CD4-positive, alpha-beta T cell (primary cell): ENCODE measurements at regions of chr10 and their contacts with region 1.

Region 1: DNA sequence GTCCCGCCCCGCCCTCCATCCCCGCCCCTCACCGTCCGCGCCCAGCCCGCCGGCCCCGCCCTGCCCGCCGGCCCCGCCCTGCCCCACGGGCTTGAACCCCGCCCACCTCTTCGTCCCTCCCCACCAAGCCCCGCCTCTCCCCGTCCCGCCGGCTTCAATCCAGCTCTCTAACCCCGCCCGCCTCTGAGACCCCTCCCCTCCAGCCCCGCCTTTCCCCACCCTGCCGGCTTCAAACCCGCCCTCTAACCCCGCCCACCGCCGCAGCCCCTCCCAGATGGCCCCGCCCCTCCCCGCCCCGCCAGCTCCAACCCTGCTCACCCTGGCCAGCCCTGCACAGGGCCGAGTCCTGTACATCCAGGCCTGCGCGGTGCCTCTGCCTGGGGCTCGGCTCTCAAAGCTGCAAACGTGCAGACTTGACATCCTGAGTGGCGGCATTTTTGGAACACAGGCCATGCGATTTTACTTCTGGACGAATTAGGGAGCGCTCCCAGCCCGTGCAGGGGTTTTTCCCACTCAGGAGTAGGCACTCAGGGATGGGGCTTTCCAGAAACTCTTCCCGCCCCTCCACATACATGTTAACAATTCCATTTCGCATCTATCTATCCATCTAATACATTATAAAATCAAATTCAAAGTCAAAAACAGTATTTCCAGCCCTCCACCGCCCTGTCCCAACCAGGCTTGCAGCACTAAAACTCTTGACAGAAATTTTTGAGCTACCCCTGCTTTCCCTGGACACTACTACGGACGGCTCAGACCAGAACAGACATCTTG is 475 bp upstream of the NMT2 start:
- DNase-seq: peak; percentile 92 to 99 (median 97)
- ATAC-seq: peak; percentile 82
- H3K4me3 ChIP-seq: peak overlapping the region; percentile 56
- H3K4me3 Mint-ChIP-seq: peak overlapping the region; percentile 91
- H3K27ac ChIP-seq: peak overlapping the region; percentile 48 to 50
- H3K27ac Mint-ChIP-seq: peak overlapping the region; percentile 94
- H3K4me1 ChIP-seq: peaks cover 51% of the 10 kb centered on the region
- H3K4me1 Mint-ChIP-seq: peaks cover 72% of the 10 kb centered on the region
- H3K27me3 ChIP-seq: no peaks in the 10 kb centered on the region
- H3K27me3 Mint-ChIP-seq: no peaks in the 10 kb centered on the region
- CTCF ChIP-seq: no peak

Region 2: GRCh38 chr10:13348216-13349017 is 1820.6 kb before region 1 on chr10 and contains the start of gene SEPHS1:
- CTCF ChIA-PET with region 1: no interaction called
- POLR2A ChIA-PET with region 1: no interaction called
- intact Hi-C with region 1: loop called in 1 of 2 experiments (anchors 10 kb)
- DNase-seq: peak; percentile 67 to 91 (median 81)
- ATAC-seq: peak; percentile 69
- H3K4me3 ChIP-seq: peak within 1 kb of the TSS; percentile 91
- H3K4me3 Mint-ChIP-seq: peak within 1 kb of the TSS; percentile 98
- H3K27ac ChIP-seq: peak within 1 kb of the TSS; percentile 63 to 83
- H3K27ac Mint-ChIP-seq: peak within 1 kb of the TSS; percentile 93
- H3K4me1 ChIP-seq: peaks cover 50% of the 10 kb centered on the region
- H3K4me1 Mint-ChIP-seq: peaks cover 69% of the 10 kb centered on the region
- H3K27me3 ChIP-seq: no peaks in the 10 kb centered on the region
- H3K27me3 Mint-ChIP-seq: no peaks in the 10 kb centered on the region
- CTCF ChIP-seq: no peak
- total RNA-seq, gene SEPHS1: 13.1 to 17.9 TPM

Region 3: DNA sequence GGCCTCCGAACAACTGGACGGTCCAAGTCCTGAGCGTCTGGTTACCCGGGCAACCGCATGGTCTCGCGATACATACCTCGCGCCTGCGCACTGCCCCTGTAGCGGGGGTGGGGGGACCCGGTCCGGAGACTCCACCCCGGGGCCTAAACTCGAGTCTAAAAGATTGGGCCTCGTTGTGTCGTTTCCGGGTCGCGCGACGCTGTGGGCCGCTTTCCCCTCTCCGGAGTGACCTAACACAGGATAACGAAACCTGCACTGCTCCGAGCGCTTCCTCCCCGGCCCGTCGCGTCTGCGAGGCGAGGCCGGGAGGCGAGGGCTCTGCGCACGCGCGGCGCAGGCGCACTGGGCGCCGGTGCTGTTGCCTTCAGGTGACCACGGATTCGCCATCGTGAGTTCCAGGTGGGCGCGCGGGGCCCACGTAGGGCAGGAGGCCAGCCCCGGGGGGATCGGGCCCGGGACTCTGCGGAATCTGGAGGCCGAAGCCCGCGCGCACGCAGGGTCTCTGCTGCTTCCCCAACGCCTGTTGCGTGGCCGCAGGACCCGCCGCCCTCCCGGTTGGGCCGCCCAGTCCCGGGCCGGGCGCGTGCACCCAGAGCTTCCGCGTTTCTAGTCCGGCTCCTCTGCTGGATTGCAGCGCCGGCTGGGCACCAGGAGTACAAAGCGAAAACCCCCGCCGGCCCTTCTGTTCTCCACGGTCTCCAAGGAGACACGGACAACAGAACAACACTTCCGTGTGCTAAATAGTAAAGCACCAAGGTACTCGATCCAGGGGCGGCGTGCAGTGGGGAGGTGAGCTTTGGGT is 71.8 kb before region 1 on chr10 and contains the start of gene RPP38:
- CTCF ChIA-PET with region 1: interaction called, 4 read pairs
- POLR2A ChIA-PET with region 1: interaction called, 4 read pairs
- intact Hi-C with region 1: loop called in 1 of 2 experiments (anchors 5 kb)
- DNase-seq: peak; percentile 89 to 97 (median 92)
- ATAC-seq: peak; percentile 80
- H3K4me3 ChIP-seq: peak within 1 kb of the TSS; percentile 80
- H3K4me3 Mint-ChIP-seq: peak within 1 kb of the TSS; percentile 95
- H3K27ac ChIP-seq: peak within 1 kb of the TSS; percentile 89 to 95
- H3K27ac Mint-ChIP-seq: peak within 1 kb of the TSS; percentile 97
- H3K4me1 ChIP-seq: peaks cover 43% of the 10 kb centered on the region
- H3K4me1 Mint-ChIP-seq: peaks cover 38% of the 10 kb centered on the region
- H3K27me3 ChIP-seq: no peaks in the 10 kb centered on the region
- H3K27me3 Mint-ChIP-seq: no peaks in the 10 kb centered on the region
- CTCF ChIP-seq: no peak
- total RNA-seq, gene RPP38: 12.9 to 14.9 TPM

Region 4: GRCh38 chr10:15182540-15183207 is 13.7 kb after region 1 on chr10:
- CTCF ChIA-PET with region 1: interaction called, 3 read pairs
- POLR2A ChIA-PET with region 1: interaction called, 24 read pairs
- intact Hi-C with region 1: no loop called
- DNase-seq: no peak
- ATAC-seq: no peak
- H3K4me3 ChIP-seq: no peak overlapping the region
- H3K4me3 Mint-ChIP-seq: no peak overlapping the region
- H3K27ac ChIP-seq: no peak overlapping the region
- H3K27ac Mint-ChIP-seq: no peak overlapping the region
- H3K4me1 ChIP-seq: peaks cover 33% of the 10 kb centered on the region
- H3K4me1 Mint-ChIP-seq: peaks cover 32% of the 10 kb centered on the region
- H3K27me3 ChIP-seq: no peaks in the 10 kb centered on the region
- H3K27me3 Mint-ChIP-seq: no peaks in the 10 kb centered on the region
- CTCF ChIP-seq: no peak

Region 5: DNA sequence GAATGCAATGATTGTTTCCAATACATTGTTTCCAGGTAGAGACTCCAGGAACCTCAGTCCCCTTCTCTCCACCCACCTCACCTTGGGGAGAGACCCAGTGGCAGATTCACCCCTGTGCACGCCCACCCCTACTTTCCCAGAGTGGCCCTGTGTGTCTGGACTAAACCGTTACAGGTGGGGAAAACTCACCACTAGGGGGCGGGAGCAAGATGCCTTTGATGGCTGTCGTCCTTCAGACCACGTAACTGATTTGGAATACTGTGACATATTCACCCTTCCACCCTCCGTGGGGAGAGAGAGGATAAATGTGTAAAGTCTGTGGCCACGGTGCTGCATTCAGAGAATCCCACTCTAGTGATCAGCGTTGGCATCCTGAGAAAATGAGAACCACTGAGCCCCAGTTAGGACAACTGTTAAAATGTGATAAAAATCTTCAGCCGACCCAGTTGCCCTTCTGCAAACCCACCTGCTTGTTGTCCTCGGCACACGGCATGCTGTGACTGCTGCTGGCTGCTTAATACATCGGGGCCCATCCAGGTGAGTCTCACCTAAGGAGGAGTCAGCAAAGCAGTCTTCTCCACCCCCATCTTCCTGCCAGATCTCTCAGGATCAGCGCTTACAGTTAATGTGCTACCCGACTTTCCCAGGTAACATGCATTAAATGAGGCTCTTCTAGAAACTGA is 41.0 kb after region 1 on chr10:
- CTCF ChIA-PET with region 1: interaction called, 9 read pairs
- POLR2A ChIA-PET with region 1: interaction called, 40 read pairs
- intact Hi-C with region 1: loop called (anchors 1 kb)
- DNase-seq: peak; percentile 65 to 94 (median 78)
- ATAC-seq: peak; percentile 54
- H3K4me3 ChIP-seq: peak overlapping the region; percentile 11
- H3K4me3 Mint-ChIP-seq: peak overlapping the region; percentile 72
- H3K27ac ChIP-seq: no peak overlapping the region
- H3K27ac Mint-ChIP-seq: peak overlapping the region; percentile 98
- H3K4me1 ChIP-seq: peaks cover 56% of the 10 kb centered on the region
- H3K4me1 Mint-ChIP-seq: peaks cover 60% of the 10 kb centered on the region
- H3K27me3 ChIP-seq: no peaks in the 10 kb centered on the region
- H3K27me3 Mint-ChIP-seq: no peaks in the 10 kb centered on the region
- CTCF ChIP-seq: peak; percentile 88

Region 6: GRCh38 chr10:15293862-15294842 is 125.2 kb after region 1 on chr10:
- CTCF ChIA-PET with region 1: no interaction called
- POLR2A ChIA-PET with region 1: no interaction called
- intact Hi-C with region 1: no loop called
- DNase-seq: no peak
- ATAC-seq: no peak
- H3K4me3 ChIP-seq: no peak overlapping the region
- H3K4me3 Mint-ChIP-seq: no peak overlapping the region
- H3K27ac ChIP-seq: no peak overlapping the region
- H3K27ac Mint-ChIP-seq: no peak overlapping the region
- H3K4me1 ChIP-seq: no peaks in the 10 kb centered on the region
- H3K4me1 Mint-ChIP-seq: no peaks in the 10 kb centered on the region
- H3K27me3 ChIP-seq: no peaks in the 10 kb centered on the region
- H3K27me3 Mint-ChIP-seq: no peaks in the 10 kb centered on the region
- CTCF ChIP-seq: no peak

Region 7: GRCh38 chr10:16436758-16437539 is 1268.0 kb after region 1 on chr10 and contains the start of gene PTER:
- CTCF ChIA-PET with region 1: no interaction called
- POLR2A ChIA-PET with region 1: no interaction called
- intact Hi-C with region 1: loop called in 1 of 2 experiments (anchors 10 kb)
- DNase-seq: peak; percentile 95 to 99 (median 97)
- ATAC-seq: peak; percentile 98
- H3K4me3 ChIP-seq: peak within 1 kb of the TSS; percentile 68
- H3K4me3 Mint-ChIP-seq: peak within 1 kb of the TSS; percentile 91
- H3K27ac ChIP-seq: peak within 1 kb of the TSS; percentile 57 to 81
- H3K27ac Mint-ChIP-seq: peak within 1 kb of the TSS; percentile 80
- H3K4me1 ChIP-seq: peaks cover 47% of the 10 kb centered on the region
- H3K4me1 Mint-ChIP-seq: peaks cover 47% of the 10 kb centered on the region
- H3K27me3 ChIP-seq: no peaks in the 10 kb centered on the region
- H3K27me3 Mint-ChIP-seq: no peaks in the 10 kb centered on the region
- CTCF ChIP-seq: no peak
- total RNA-seq, gene PTER: 8.2 to 9.7 TPM